CD4-positive, alpha-beta T cell (primary cell): ENCODE measurements at regions of chr19 and their contacts with region 1.

Region 1: DNA sequence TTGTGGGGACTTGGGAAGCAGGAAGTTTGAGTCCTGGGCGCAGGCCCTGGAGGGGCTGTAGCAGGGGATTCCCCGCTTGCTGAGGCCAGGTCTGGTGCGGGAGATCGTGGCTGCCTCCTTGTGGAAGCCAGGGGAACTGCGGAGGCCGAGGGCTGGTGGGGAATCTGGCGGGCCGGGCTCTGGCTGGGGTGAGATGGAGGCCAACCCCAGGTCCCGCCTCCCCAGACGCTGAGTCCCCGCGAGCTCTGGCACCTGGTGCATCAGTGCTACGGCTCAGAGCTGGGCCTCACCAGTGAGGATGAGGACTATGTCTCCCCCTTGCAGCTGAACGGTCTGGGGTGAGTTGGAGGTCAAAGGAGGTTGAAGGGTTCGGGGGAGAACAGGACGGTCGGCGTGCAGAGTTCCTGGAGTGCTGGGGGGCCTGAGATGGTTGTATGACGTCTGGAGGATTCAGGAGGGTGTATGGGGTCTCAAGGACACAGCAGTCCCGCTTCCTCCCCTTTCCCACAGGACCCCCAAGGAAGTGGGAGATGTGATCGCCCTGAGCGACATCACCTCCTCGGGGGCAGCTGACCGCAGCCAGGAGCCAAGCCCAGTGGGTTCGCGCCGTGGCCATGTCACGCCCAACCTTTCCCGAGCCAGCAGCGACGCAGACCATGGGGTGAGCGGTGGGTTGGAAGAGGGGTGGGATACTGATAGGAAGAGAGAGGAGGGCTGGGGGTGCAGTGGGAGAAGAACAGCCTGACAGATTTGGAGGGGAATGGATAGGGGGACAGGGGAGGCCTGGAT is 13.1 kb downstream of the GRAMD1A start:
- DNase-seq: peak; percentile 74 to 91 (median 82)
- ATAC-seq: peak; percentile 82
- H3K4me3 ChIP-seq: peak overlapping the region; percentile 48
- H3K4me3 Mint-ChIP-seq: peak overlapping the region; percentile 87
- H3K27ac ChIP-seq: peak overlapping the region; percentile 79 to 87
- H3K27ac Mint-ChIP-seq: peak overlapping the region; percentile 91
- H3K4me1 ChIP-seq: peaks cover 82% of the 10 kb centered on the region
- H3K4me1 Mint-ChIP-seq: peaks cover 73% of the 10 kb centered on the region
- H3K27me3 ChIP-seq: no peaks in the 10 kb centered on the region
- H3K27me3 Mint-ChIP-seq: no peaks in the 10 kb centered on the region
- CTCF ChIP-seq: peak; percentile 94

Region 2: GRCh38 chr19:34838753-34839431 is 174.3 kb before region 1 on chr19:
- CTCF ChIA-PET with region 1: interaction called, 4 read pairs
- POLR2A ChIA-PET with region 1: interaction called, 3 read pairs
- intact Hi-C with region 1: loop called in 1 of 2 experiments (anchors 5 kb)
- DNase-seq: peak in 8 of 14 experiments; percentile 7 to 60 (median 28)
- ATAC-seq: peak; percentile 62
- H3K4me3 ChIP-seq: no peak overlapping the region
- H3K4me3 Mint-ChIP-seq: peak overlapping the region; percentile 52
- H3K27ac ChIP-seq: no peak overlapping the region
- H3K27ac Mint-ChIP-seq: no peak overlapping the region
- H3K4me1 ChIP-seq: peaks cover 12% of the 10 kb centered on the region
- H3K4me1 Mint-ChIP-seq: peaks cover 33% of the 10 kb centered on the region
- H3K27me3 ChIP-seq: no peaks in the 10 kb centered on the region
- H3K27me3 Mint-ChIP-seq: no peaks in the 10 kb centered on the region
- CTCF ChIP-seq: peak; percentile 38

Region 3: DNA sequence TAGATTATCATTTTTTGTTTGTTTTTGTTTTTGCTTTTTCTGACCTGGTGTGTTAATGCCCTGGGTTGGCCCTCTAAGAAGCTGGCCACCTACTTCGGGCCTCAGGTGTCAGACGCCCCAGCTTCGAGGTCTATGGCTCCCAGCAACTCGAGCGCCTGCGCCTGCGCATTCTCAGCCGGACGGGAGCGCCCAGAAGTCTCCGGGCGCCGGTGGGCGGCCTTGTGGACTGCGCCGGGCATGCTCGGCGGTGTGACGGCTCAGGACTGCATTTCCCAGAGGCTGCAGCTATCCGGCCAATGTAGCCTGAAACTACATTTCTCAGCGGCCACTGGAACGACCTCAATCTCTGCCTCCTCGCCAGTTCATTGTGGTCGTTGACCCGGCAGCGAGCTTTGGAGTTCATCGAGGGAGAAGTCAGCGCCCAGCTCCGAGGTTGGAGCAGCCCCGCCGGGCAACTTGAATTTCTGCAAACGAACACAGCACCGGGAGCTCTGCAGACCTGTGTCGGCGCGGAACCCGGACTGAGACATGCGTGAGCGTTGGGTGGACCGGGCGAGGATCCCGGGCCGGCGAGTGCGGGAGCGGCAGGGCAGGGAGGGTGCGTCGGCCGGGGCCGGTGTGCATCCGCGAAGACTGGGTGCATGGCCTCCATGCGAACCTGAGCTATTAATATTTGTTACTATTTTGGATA is 86.4 kb before region 1 on chr19 and contains the start of gene ZNF30:
- CTCF ChIA-PET with region 1: no interaction called
- POLR2A ChIA-PET with region 1: interaction called, 12 read pairs
- intact Hi-C with region 1: no loop called
- DNase-seq: peak; percentile 62 to 90 (median 79)
- ATAC-seq: peak; percentile 93
- H3K4me3 ChIP-seq: peak within 1 kb of the TSS; percentile 89
- H3K4me3 Mint-ChIP-seq: peak within 1 kb of the TSS; percentile 91
- H3K27ac ChIP-seq: no peak within 1 kb of the TSS
- H3K27ac Mint-ChIP-seq: peak within 1 kb of the TSS; percentile 71
- H3K4me1 ChIP-seq: peaks cover 13% of the 10 kb centered on the region
- H3K4me1 Mint-ChIP-seq: peaks cover 28% of the 10 kb centered on the region
- H3K27me3 ChIP-seq: peaks cover 0 to 7% of the 10 kb centered on the region in 2 experiments
- H3K27me3 Mint-ChIP-seq: peaks cover 9% of the 10 kb centered on the region
- CTCF ChIP-seq: no peak
- total RNA-seq, gene ZNF30: 0.84 to 1.1 TPM

Region 4: GRCh38 chr19:34974646-34975045 is 38.6 kb before region 1 on chr19:
- CTCF ChIA-PET with region 1: interaction called, 50 read pairs
- POLR2A ChIA-PET with region 1: interaction called, 58 read pairs
- intact Hi-C with region 1: loop called (anchors 1 kb)
- DNase-seq: peak in 1 of 14 experiments; percentile 37
- ATAC-seq: no peak
- H3K4me3 ChIP-seq: no peak overlapping the region
- H3K4me3 Mint-ChIP-seq: no peak overlapping the region
- H3K27ac ChIP-seq: no peak overlapping the region
- H3K27ac Mint-ChIP-seq: peak overlapping the region; percentile 18
- H3K4me1 ChIP-seq: peaks cover 21% of the 10 kb centered on the region
- H3K4me1 Mint-ChIP-seq: peaks cover 22% of the 10 kb centered on the region
- H3K27me3 ChIP-seq: no peaks in the 10 kb centered on the region
- H3K27me3 Mint-ChIP-seq: no peaks in the 10 kb centered on the region
- CTCF ChIP-seq: no peak

Region 5: GRCh38 chr19:35027851-35028599 is 14.8 kb after region 1 on chr19:
- CTCF ChIA-PET with region 1: no interaction called
- POLR2A ChIA-PET with region 1: interaction called, 35 read pairs
- intact Hi-C with region 1: no loop called
- DNase-seq: no peak
- ATAC-seq: no peak
- H3K4me3 ChIP-seq: no peak overlapping the region
- H3K4me3 Mint-ChIP-seq: peak overlapping the region; percentile 56
- H3K27ac ChIP-seq: no peak overlapping the region
- H3K27ac Mint-ChIP-seq: no peak overlapping the region
- H3K4me1 ChIP-seq: peaks cover 15% of the 10 kb centered on the region
- H3K4me1 Mint-ChIP-seq: peaks cover 11% of the 10 kb centered on the region
- H3K27me3 ChIP-seq: peaks cover 6 to 19% of the 10 kb centered on the region in 2 experiments
- H3K27me3 Mint-ChIP-seq: peaks cover 19% of the 10 kb centered on the region
- CTCF ChIP-seq: no peak

Region 6: DNA sequence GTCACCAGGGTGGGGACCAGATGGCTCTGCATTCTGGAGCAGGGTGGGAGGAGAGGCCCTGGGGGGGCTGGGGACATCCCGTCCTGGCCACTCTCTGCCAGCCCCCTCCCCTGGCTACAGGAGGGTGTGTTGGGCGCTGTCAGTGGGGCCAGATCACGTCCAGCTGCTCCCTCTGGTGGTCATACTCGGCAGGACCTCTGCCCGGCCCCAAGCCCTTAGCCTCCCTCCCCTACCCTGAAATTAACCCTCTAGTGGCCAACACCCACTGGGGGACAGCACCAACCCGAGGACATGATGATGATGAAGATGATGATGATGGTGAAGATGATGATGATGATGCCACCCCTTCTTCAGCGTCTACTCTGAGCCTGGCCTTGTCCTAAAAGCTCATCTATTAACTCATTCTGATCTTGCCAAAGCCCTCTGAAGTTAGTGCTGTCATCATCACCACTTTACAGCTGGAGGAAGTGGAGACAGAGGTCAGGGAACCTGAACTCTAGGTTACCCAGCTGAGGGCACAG is 122.2 kb after region 1 on chr19:
- CTCF ChIA-PET with region 1: no interaction called
- POLR2A ChIA-PET with region 1: no interaction called
- intact Hi-C with region 1: no loop called
- DNase-seq: peak in 13 of 14 experiments; percentile 42 to 81 (median 58)
- ATAC-seq: peak; percentile 92
- H3K4me3 ChIP-seq: no peak overlapping the region
- H3K4me3 Mint-ChIP-seq: no peak overlapping the region
- H3K27ac ChIP-seq: no peak overlapping the region
- H3K27ac Mint-ChIP-seq: peak overlapping the region; percentile 13
- H3K4me1 ChIP-seq: peaks cover 13% of the 10 kb centered on the region
- H3K4me1 Mint-ChIP-seq: peaks cover 8% of the 10 kb centered on the region
- H3K27me3 ChIP-seq: no peaks in the 10 kb centered on the region
- H3K27me3 Mint-ChIP-seq: no peaks in the 10 kb centered on the region
- CTCF ChIP-seq: peak; percentile 58